Caco-2 (cell line): ENCODE measurements at regions of chr4 and their contacts with region 1.

Region 1: DNA sequence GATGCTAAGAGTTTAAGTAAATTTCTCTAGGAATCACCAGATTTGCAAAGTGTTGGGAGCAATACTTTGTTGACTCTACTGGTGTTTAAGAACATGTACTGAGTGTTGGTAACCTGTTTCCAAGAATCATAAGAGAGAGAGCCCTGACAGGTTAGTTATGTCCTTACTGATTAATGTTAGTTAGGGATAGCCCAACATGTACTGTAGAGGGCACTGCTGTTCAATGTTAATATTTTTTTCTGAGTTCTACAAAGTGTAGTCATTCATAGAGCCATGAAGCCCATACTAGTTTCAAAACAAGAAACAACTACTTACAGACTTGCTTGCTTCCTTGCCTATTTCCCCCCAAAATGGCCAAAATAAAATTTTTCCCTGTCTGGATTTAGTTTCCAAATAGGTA is 11.9 kb downstream of the TMPRSS11D start:
- DNase-seq: peak in 1 of 2 experiments; percentile 32
- H3K4me3 ChIP-seq: no peak overlapping the region
- H3K4me3 Mint-ChIP-seq: no peak overlapping the region
- H3K27ac Mint-ChIP-seq: no peak overlapping the region
- H3K4me1 ChIP-seq: no peaks in the 10 kb centered on the region
- H3K4me1 Mint-ChIP-seq: no peaks in the 10 kb centered on the region
- H3K27me3 ChIP-seq: no peaks in the 10 kb centered on the region
- H3K27me3 Mint-ChIP-seq: peaks cover 3% of the 10 kb centered on the region
- CTCF ChIP-seq: peak; percentile 24 to 32

Region 2: GRCh38 chr4:67909905-67910584 is 38.2 kb after region 1 on chr4:
- CTCF ChIA-PET with region 1: no interaction called
- POLR2A ChIA-PET with region 1: no interaction called
- intact Hi-C with region 1: loop called (anchors 1 kb)
- DNase-seq: no peak
- H3K4me3 ChIP-seq: no peak overlapping the region
- H3K4me3 Mint-ChIP-seq: no peak overlapping the region
- H3K27ac Mint-ChIP-seq: no peak overlapping the region
- H3K4me1 ChIP-seq: peaks cover 9% of the 10 kb centered on the region
- H3K4me1 Mint-ChIP-seq: no peaks in the 10 kb centered on the region
- H3K27me3 ChIP-seq: no peaks in the 10 kb centered on the region
- H3K27me3 Mint-ChIP-seq: no peaks in the 10 kb centered on the region
- CTCF ChIP-seq: peak; percentile 47 to 66

Region 3: GRCh38 chr4:68002906-68003305 is 131.0 kb after region 1 on chr4:
- CTCF ChIA-PET with region 1: no interaction called
- POLR2A ChIA-PET with region 1: no interaction called
- intact Hi-C with region 1: no loop called
- DNase-seq: no peak
- H3K4me3 ChIP-seq: no peak overlapping the region
- H3K4me3 Mint-ChIP-seq: no peak overlapping the region
- H3K27ac Mint-ChIP-seq: no peak overlapping the region
- H3K4me1 ChIP-seq: no peaks in the 10 kb centered on the region
- H3K4me1 Mint-ChIP-seq: no peaks in the 10 kb centered on the region
- H3K27me3 ChIP-seq: no peaks in the 10 kb centered on the region
- H3K27me3 Mint-ChIP-seq: peaks cover 6% of the 10 kb centered on the region
- CTCF ChIP-seq: no peak